Heart right ventricle (tissue), 16 donors: ENCODE measurements at regions of chr4 and their contacts with region 1.

Region 1: DNA sequence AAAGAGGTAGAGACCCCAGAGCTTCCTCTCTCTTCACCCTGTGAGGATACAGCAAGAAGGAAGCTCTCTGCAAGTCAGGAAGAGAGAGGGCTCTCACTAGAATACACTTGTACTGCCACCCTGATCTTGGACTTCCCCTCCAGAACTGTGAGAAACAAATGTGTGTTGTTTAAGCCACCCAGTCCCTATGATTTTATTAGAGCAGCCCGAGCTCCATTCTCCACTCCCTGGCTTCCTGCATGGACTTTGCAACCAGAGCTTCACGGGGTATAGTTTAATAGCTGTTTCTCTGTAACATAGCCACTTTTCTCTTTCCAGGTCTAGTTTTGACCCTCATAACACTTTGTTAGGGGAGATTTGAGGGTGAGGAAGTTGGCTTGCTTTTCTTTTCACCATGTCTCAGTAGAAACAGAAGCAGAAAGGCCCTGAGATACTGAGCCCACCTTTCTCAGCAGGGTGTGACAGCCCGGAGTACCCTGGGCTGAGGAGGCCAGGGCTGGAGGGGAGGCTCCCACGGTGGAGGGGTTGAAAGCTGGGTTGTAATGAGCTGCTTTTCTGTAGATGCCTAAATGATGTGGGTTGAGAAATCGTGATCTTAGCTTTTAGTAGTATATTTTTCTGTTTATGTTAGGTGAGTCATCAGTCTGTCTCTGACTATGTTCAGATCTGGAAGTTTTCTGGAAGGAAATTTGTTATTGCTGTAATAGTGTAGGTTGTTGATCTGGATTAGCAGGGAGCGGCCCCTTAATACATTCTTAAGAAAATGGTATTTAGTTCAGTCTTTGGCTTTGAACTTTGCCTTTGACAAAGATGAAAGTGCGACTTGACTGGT is 118.6 kb downstream of the PTTG2 start:
- DNase-seq: no peak
- ATAC-seq: peak in 2 of 8 donors; percentile 21 to 23
- H3K4me3 ChIP-seq: no peak overlapping the region
- H3K27ac ChIP-seq: peak overlapping the region in 9 of 10 donors; percentile 29 to 91 (median 53)
- H3K4me1 ChIP-seq: peaks cover 3 to 100% (median 75%) of the 10 kb centered on the region in 9 donors
- H3K27me3 ChIP-seq: no peaks in the 10 kb centered on the region
- CTCF ChIP-seq: no peak

Region 2: DNA sequence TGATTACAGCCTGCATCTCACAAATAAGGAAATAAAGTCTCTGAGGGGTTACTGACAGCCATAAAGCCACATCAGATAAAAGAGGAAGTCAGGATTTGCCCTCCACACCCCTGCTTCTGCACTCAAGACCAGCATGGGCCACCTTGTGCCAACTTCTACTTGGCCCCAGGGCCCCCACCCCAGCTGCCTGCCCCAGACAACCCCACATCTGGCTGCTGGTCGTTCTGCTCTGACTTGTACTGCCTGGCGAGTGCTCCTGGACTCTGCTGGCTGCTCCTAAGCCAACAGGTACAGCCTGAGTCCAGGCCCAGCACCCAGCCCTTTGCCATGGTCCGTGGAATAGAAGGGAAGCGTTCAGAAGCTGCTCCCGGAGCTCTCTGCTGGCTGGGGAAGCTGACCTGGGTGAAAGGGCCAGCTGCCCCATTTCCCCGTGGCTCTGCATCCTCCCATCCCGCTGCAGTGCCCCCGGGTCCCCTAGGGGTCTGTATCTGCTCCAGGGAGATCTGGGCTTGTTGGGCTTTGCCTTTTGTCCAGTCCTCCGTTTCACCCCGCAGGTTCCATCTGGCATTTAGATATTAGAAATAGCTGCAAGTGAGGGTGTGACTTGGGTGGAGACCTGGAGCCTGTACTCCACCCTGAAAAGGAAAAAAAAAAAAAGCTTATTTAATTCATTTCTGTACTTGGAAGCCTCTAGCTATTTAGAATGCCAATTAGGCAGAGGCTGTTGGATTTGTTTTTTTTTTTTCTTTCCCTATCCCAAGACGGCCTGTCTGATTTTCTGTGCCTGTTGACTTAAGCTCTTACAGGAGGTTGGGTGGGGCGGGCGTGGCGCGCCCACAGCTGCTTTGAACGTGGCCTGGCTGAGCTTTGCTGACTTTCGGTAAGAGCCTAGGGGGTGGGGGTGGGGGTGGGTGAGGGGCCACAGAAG is 76.1 kb after region 1 on chr4:
- intact Hi-C with region 1: loop called in 1 of 10 experiments (anchors 5 kb)
- DNase-seq: peak; percentile 36 to 60
- ATAC-seq: peak; percentile 71 to 84 (median 80)
- H3K4me3 ChIP-seq: peak overlapping the region in 3 of 10 donors; percentile 3 to 12 (median 7)
- H3K27ac ChIP-seq: peak overlapping the region; percentile 61 to 81 (median 72)
- H3K4me1 ChIP-seq: peaks cover 6 to 67% (median 31%) of the 10 kb centered on the region in 9 donors
- H3K27me3 ChIP-seq: no peaks in the 10 kb centered on the region
- CTCF ChIP-seq: no peak

Region 3: DNA sequence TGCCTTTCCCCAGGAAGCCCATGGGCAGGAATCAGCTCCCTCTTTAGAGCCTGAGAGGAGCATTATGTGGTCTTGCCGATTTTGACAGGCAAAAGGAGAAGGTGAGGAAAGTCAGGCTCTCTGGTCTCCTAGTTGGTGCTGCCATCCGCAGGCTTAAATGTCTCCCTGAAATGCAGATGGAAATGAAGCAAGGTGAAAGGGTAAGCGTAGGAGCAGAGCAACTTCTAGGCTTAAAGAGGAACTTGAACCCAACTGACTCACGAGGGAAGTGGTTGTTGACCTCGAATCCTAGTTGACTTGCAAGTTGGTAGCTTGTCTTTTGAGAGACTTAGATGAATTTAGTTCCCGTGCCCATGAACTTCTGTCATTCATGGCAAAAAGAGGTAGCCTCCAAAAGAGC is 87.3 kb after region 1 on chr4:
- intact Hi-C with region 1: loop called in 1 of 10 experiments (anchors 5 kb)
- DNase-seq: no peak
- ATAC-seq: peak in 1 of 8 donors; percentile 31
- H3K4me3 ChIP-seq: no peak overlapping the region
- H3K27ac ChIP-seq: peak overlapping the region in 2 of 10 donors; percentile 8 to 64
- H3K4me1 ChIP-seq: peaks cover 0 to 47% (median 16%) of the 10 kb centered on the region in 9 donors
- H3K27me3 ChIP-seq: no peaks in the 10 kb centered on the region
- CTCF ChIP-seq: no peak